ENCODE measurements at regions of chr15 and their contacts with region 1.

Region 1: DNA sequence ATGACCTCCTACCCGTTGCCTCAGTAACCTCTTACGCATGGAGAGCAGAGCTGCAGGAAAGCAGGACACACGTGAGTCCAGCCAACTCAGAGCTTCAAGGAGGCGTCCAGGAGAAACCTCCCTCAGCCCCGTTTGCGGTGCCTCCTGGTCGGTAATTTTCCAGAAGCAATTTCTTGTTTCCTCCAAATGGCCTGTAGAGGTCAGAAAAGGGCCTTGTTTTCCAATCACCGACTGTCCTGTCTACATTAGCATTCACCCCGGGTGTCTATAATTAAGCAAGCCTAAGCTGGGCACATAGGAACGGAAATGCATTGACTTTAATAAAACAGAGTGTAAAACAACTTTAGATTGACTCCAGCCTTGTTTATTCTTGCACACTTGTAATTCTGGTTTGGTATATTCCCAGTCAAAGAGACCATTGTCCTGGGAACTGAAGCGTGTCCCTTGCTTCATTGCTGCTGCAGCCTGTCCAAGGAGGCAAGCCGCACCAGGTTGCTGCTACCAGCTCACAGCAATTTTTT is 836.2 kb downstream of the AGBL1 start:
- DNase-seq: peak; percentile 42
- H3K4me3 Mint-ChIP-seq: no peak overlapping the region
- H3K27ac Mint-ChIP-seq: no peak overlapping the region
- H3K4me1 Mint-ChIP-seq: no peaks in the 10 kb centered on the region
- H3K27me3 Mint-ChIP-seq: no peaks in the 10 kb centered on the region
- CTCF ChIP-seq: peak; percentile 51

Region 2: DNA sequence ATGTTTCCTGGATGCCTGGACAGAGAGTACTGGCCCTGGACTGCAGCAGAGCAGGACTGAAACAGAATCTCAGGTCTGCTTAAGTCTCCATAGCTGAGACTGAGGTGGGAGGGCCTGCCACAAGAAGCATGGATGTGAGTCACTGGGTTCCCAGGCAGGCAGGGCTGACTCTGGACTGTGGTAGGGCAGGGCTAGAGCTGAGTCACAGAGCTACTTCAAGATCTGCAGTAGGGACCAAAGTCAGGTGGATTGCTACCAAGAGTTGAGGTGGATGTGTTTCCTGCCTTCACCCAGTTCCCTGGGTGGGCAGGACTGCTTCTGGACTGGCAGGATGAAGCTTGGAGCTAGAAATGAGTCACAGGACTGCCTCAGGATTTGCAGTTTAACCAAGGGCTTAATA is 553.3 kb before region 1 on chr15:
- CTCF ChIA-PET with region 1: no interaction called
- POLR2A ChIA-PET with region 1: no interaction called
- intact Hi-C with region 1: no loop called
- DNase-seq: peak; percentile 86
- H3K4me3 Mint-ChIP-seq: no peak overlapping the region
- H3K27ac Mint-ChIP-seq: peak overlapping the region; percentile 49
- H3K4me1 Mint-ChIP-seq: peaks cover 20% of the 10 kb centered on the region
- H3K27me3 Mint-ChIP-seq: no peaks in the 10 kb centered on the region
- CTCF ChIP-seq: no peak

Region 3: GRCh38 chr15:87033056-87033455 is 117.2 kb after region 1 on chr15:
- CTCF ChIA-PET with region 1: no interaction called
- POLR2A ChIA-PET with region 1: no interaction called
- intact Hi-C with region 1: loop called (anchors 5 kb)
- DNase-seq: peak; percentile 12
- H3K4me3 Mint-ChIP-seq: no peak overlapping the region
- H3K27ac Mint-ChIP-seq: peak overlapping the region; percentile 64
- H3K4me1 Mint-ChIP-seq: peaks cover 20% of the 10 kb centered on the region
- H3K27me3 Mint-ChIP-seq: no peaks in the 10 kb centered on the region
- CTCF ChIP-seq: no peak

Region 4: GRCh38 chr15:87154767-87155166 is 238.9 kb after region 1 on chr15:
- CTCF ChIA-PET with region 1: no interaction called
- POLR2A ChIA-PET with region 1: no interaction called
- intact Hi-C with region 1: no loop called
- DNase-seq: peak; percentile 32
- H3K4me3 Mint-ChIP-seq: no peak overlapping the region
- H3K27ac Mint-ChIP-seq: peak overlapping the region; percentile 41
- H3K4me1 Mint-ChIP-seq: peaks cover 16% of the 10 kb centered on the region
- H3K27me3 Mint-ChIP-seq: no peaks in the 10 kb centered on the region
- CTCF ChIP-seq: no peak

Region 5: DNA sequence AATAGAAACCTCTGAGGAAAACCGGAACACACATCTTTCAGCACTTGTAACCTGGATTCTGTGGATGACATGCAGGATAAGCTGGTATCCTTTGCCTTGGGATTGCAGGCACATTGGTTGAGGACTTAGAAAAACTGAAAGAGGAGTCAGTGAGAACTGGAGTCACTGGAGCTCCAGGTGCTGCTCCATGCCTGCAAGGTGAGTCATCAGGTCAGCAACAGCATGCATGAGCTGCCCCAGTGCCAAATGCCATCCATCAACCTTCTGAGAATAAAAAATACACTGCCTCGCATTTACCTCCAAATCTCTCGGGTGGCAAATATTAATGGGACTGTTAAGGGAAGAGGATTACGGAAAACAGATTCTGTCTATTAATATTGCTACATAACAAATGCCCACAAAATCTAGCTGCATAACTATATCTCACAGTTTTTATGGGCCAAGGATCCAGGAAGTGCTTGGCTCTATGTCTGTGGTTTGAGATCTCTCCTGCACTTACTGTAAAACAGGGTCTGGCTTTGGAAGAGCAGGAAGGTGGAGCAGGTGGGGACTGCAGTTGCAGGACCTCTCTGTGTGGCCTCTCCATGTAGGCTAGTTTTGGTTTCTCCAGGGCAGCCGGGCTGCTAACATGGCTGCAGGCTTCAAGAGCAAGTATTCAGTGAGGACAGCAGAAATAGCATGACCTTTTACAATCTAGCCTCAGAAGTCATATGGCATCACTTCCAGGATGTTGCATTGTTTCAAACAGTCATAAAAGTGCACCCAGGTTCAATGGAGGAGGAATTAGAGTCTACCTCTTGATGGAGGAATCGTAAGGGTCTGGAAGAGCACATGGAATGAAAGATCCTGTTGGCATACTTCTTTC is 611.8 kb after region 1 on chr15:
- CTCF ChIA-PET with region 1: no interaction called
- POLR2A ChIA-PET with region 1: no interaction called
- intact Hi-C with region 1: loop called (anchors 5 kb)
- DNase-seq: peak; percentile 42
- H3K4me3 Mint-ChIP-seq: no peak overlapping the region
- H3K27ac Mint-ChIP-seq: no peak overlapping the region
- H3K4me1 Mint-ChIP-seq: peaks cover 14% of the 10 kb centered on the region
- H3K27me3 Mint-ChIP-seq: no peaks in the 10 kb centered on the region
- CTCF ChIP-seq: no peak

Region 6: GRCh38 chr15:87752250-87752951 is 836.5 kb after region 1 on chr15:
- CTCF ChIA-PET with region 1: no interaction called
- POLR2A ChIA-PET with region 1: no interaction called
- intact Hi-C with region 1: loop called (anchors 5 kb)
- DNase-seq: peak; percentile 70
- H3K4me3 Mint-ChIP-seq: no peak overlapping the region
- H3K27ac Mint-ChIP-seq: no peak overlapping the region
- H3K4me1 Mint-ChIP-seq: peaks cover 15% of the 10 kb centered on the region
- H3K27me3 Mint-ChIP-seq: no peaks in the 10 kb centered on the region
- CTCF ChIP-seq: no peak

Region 7: GRCh38 chr15:88454867-88455810 is 1539.3 kb after region 1 on chr15:
- CTCF ChIA-PET with region 1: interaction called, 3 read pairs
- POLR2A ChIA-PET with region 1: no interaction called
- intact Hi-C with region 1: loop called (anchors 5 kb)
- DNase-seq: peak; percentile 73
- H3K4me3 Mint-ChIP-seq: no peak overlapping the region
- H3K27ac Mint-ChIP-seq: no peak overlapping the region
- H3K4me1 Mint-ChIP-seq: peaks cover 1% of the 10 kb centered on the region
- H3K27me3 Mint-ChIP-seq: no peaks in the 10 kb centered on the region
- CTCF ChIP-seq: peak; percentile 58

Measured in MCF 10A (cell line).